Endothelial cell of umbilical vein (primary cell): ENCODE measurements at regions of chr2 and their contacts with region 1.

Region 1: DNA sequence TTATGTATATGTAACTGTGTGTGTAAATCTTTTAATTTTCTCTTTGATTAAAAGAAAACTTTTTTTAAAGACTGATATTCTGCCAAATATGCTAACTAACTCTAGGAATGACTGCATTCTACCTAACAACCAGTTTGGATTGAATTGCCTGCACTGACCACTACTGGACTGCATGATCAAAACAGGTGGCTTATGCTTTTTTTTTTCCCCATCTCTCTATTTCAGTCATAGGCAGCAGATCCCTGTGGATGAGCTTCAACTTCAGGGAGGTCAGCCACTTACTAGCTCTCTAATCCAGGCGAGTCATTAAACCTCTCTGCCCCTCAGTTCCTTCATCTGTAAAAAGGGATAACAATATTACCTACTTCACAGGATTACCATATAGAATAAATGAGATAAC is 138.6 kb upstream of the SERTAD2 start:
- DNase-seq: peak; percentile 43
- H3K4me3 ChIP-seq: no peak overlapping the region
- H3K27ac ChIP-seq: peak overlapping the region; percentile 82
- H3K4me1 ChIP-seq: peaks cover 53% of the 10 kb centered on the region
- H3K27me3 ChIP-seq: no peaks in the 10 kb centered on the region
- CTCF ChIP-seq: peak in 1 of 2 donors; percentile 21
- POLR2A ChIP-seq: no peak

Region 2: DNA sequence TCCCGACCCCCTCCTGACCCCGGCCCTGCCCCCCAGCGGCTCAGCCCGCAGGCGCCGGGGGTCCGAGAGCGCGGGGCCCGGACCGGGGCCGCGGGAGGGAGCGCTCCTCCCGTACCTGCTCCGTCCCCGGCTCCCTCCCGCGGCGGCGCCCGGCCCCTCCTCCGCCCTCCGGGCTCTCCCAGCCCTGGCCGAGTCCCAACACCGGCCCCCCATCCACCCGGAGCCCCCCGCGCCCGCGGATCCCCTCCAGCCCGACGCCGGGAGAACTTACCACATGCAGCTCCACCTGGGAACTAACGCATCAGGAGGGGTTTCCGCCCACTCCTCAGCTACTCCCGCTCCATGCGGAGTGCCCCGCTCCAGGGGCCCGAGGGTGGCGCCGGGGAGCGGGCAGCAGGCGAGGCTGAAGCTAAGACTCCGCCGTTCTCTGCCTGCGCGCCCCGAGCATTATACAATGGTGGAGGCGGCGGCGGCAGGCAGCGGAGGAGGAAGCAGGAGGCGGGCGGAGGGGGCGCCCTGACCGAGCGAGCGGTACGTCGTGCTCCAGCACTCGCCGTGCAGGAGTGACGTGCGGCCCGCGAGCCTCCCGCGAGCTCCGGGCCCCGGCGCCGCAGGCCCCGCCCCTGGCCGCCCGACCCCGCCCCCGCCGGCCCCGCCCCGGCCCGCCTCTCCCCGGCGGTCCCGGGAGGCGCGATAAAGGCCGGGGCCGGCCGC is 138.8 kb before region 1 on chr2 and contains the start of gene SERTAD2:
- CTCF ChIA-PET with region 1: interaction called, 15 read pairs
- POLR2A ChIA-PET with region 1: interaction called, 7 read pairs
- dilution Hi-C with region 1: no loop called
- intact Hi-C with region 1: loop called (anchors 2 kb)
- DNase-seq: peak; percentile 87
- H3K4me3 ChIP-seq: peak within 1 kb of the TSS; percentile 72 to 89 (median 83)
- H3K27ac ChIP-seq: peak within 1 kb of the TSS; percentile 91
- H3K4me1 ChIP-seq: peaks cover 21% of the 10 kb centered on the region
- H3K27me3 ChIP-seq: no peaks in the 10 kb centered on the region
- CTCF ChIP-seq: peak in 1 of 2 donors; percentile 14
- POLR2A ChIP-seq: peak; percentile 63
- total RNA-seq, gene SERTAD2: 11.2 and 12.0 TPM in 2 replicates

Region 3: GRCh38 chr2:64767670-64768468 is 24.4 kb before region 1 on chr2:
- CTCF ChIA-PET with region 1: interaction called, 13 read pairs
- POLR2A ChIA-PET with region 1: interaction called, 10 read pairs
- dilution Hi-C with region 1: no loop called
- intact Hi-C with region 1: loop called (anchors 1 kb)
- DNase-seq: peak; percentile 87
- H3K4me3 ChIP-seq: peak overlapping the region; percentile 57 to 80 (median 75)
- H3K27ac ChIP-seq: peak overlapping the region; percentile 87
- H3K4me1 ChIP-seq: peaks cover 12% of the 10 kb centered on the region
- H3K27me3 ChIP-seq: no peaks in the 10 kb centered on the region
- CTCF ChIP-seq: no peak
- POLR2A ChIP-seq: peak; percentile 76

Region 4: GRCh38 chr2:64779117-64779690 is 13.1 kb before region 1 on chr2:
- CTCF ChIA-PET with region 1: interaction called, 56 read pairs
- POLR2A ChIA-PET with region 1: interaction called, 9 read pairs
- dilution Hi-C with region 1: no loop called
- intact Hi-C with region 1: loop called (anchors 1 kb)
- DNase-seq: peak; percentile 88
- H3K4me3 ChIP-seq: no peak overlapping the region
- H3K27ac ChIP-seq: peak overlapping the region; percentile 85
- H3K4me1 ChIP-seq: peaks cover 29% of the 10 kb centered on the region
- H3K27me3 ChIP-seq: no peaks in the 10 kb centered on the region
- CTCF ChIP-seq: no peak
- POLR2A ChIP-seq: no peak

Region 5: GRCh38 chr2:64807417-64807816 is 15.1 kb after region 1 on chr2:
- CTCF ChIA-PET with region 1: interaction called, 10 read pairs
- POLR2A ChIA-PET with region 1: no interaction called
- dilution Hi-C with region 1: no loop called
- intact Hi-C with region 1: loop called (anchors 1 kb)
- DNase-seq: peak; percentile 89
- H3K4me3 ChIP-seq: no peak overlapping the region
- H3K27ac ChIP-seq: no peak overlapping the region
- H3K4me1 ChIP-seq: peaks cover 15% of the 10 kb centered on the region
- H3K27me3 ChIP-seq: no peaks in the 10 kb centered on the region
- CTCF ChIP-seq: peak in 1 of 2 donors; percentile 1
- POLR2A ChIP-seq: no peak

Region 6: GRCh38 chr2:64859312-64860212 is 67.3 kb after region 1 on chr2:
- CTCF ChIA-PET with region 1: interaction called, 10 read pairs
- POLR2A ChIA-PET with region 1: interaction called, 4 read pairs
- dilution Hi-C with region 1: no loop called
- intact Hi-C with region 1: no loop called
- DNase-seq: peak; percentile 76
- H3K4me3 ChIP-seq: peak overlapping the region in 2 of 3 experiments; percentile 24 to 34
- H3K27ac ChIP-seq: peak overlapping the region; percentile 66
- H3K4me1 ChIP-seq: peaks cover 17% of the 10 kb centered on the region
- H3K27me3 ChIP-seq: no peaks in the 10 kb centered on the region
- CTCF ChIP-seq: peak in 1 of 2 donors; percentile 22
- POLR2A ChIP-seq: no peak

Region 7: GRCh38 chr2:64865073-64865830 is 72.9 kb after region 1 on chr2:
- CTCF ChIA-PET with region 1: interaction called, 9 read pairs
- POLR2A ChIA-PET with region 1: no interaction called
- dilution Hi-C with region 1: no loop called
- intact Hi-C with region 1: loop called (anchors 1 kb)
- DNase-seq: peak; percentile 71
- H3K4me3 ChIP-seq: peak overlapping the region; percentile 42 to 46 (median 44)
- H3K27ac ChIP-seq: peak overlapping the region; percentile 66
- H3K4me1 ChIP-seq: peaks cover 6% of the 10 kb centered on the region
- H3K27me3 ChIP-seq: no peaks in the 10 kb centered on the region
- CTCF ChIP-seq: peak; percentile 43 to 94
- POLR2A ChIP-seq: no peak